ENCODE measurements at regions of chr1 and their contacts with region 1.

Region 1: DNA sequence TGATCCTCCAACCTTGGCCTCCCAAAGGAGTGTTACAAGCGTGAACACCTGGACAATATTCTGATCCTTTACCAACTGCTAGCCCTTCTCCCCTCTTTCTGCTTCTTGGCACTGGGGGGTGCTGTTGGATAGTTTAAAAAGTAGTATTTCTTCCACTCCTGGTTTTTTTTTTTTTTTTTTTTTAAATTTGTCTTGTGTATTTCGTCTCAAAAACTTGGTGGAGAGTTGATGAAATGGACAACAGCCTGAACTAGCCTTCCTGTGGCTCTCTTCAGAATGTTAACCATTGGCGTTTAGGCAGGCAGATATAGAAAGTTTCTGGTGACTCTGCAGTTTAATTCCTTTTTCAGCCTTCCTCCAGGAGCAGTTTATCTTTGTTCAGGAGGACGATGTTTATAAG is 69.7 kb upstream of the USP24 start:
- DNase-seq: no peak
- H3K4me3 ChIP-seq: no peak overlapping the region
- H3K27ac ChIP-seq: no peak overlapping the region
- H3K4me1 ChIP-seq: peaks cover 0 to 4% (median 0%) of the 10 kb centered on the region in 4 donors
- H3K27me3 ChIP-seq: no peaks in the 10 kb centered on the region
- CTCF ChIP-seq: peak; percentile 47 to 62 (median 50)
- EP300 ChIP-seq: no peak
- POLR2A ChIP-seq: no peak

Region 2: DNA sequence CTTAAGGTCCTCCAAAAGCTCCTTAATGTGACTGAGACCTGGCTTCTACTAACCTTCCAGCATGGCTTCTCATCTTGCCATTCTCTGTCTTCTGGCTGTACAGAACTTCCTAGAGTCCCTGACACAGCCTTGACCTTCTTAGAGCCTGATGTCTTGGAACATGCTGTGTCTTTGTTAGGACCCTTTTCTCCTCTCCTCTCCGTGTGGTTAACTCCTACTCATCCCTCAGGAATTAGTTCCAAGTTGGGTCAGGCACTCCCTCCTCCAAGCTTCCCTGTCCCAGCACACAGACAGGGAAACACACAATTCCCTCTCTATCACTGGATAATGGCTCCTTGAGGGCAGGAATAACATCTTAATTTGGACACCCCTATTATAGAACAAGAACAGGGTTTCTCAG is 205.7 kb after region 1 on chr1:
- in situ Hi-C with region 1: no loop called
- intact Hi-C with region 1: no loop called
- DNase-seq: no peak
- H3K4me3 ChIP-seq: no peak overlapping the region
- H3K27ac ChIP-seq: no peak overlapping the region
- H3K4me1 ChIP-seq: no peaks in the 10 kb centered on the region
- H3K27me3 ChIP-seq: no peaks in the 10 kb centered on the region
- CTCF ChIP-seq: no peak
- EP300 ChIP-seq: no peak
- POLR2A ChIP-seq: no peak

Region 3: GRCh38 chr1:56816909-56817308 is 1532.1 kb after region 1 on chr1:
- in situ Hi-C with region 1: no loop called
- intact Hi-C with region 1: loop called (anchors 10 kb)
- DNase-seq: no peak
- H3K4me3 ChIP-seq: no peak overlapping the region
- H3K27ac ChIP-seq: no peak overlapping the region
- H3K4me1 ChIP-seq: peaks cover 0 to 20% (median 9%) of the 10 kb centered on the region in 4 donors
- H3K27me3 ChIP-seq: no peaks in the 10 kb centered on the region
- CTCF ChIP-seq: no peak
- EP300 ChIP-seq: no peak
- POLR2A ChIP-seq: no peak